Sigmoid colon (tissue), 7 donors: ENCODE measurements at regions of chr22 and their contacts with region 1.

Region 1: DNA sequence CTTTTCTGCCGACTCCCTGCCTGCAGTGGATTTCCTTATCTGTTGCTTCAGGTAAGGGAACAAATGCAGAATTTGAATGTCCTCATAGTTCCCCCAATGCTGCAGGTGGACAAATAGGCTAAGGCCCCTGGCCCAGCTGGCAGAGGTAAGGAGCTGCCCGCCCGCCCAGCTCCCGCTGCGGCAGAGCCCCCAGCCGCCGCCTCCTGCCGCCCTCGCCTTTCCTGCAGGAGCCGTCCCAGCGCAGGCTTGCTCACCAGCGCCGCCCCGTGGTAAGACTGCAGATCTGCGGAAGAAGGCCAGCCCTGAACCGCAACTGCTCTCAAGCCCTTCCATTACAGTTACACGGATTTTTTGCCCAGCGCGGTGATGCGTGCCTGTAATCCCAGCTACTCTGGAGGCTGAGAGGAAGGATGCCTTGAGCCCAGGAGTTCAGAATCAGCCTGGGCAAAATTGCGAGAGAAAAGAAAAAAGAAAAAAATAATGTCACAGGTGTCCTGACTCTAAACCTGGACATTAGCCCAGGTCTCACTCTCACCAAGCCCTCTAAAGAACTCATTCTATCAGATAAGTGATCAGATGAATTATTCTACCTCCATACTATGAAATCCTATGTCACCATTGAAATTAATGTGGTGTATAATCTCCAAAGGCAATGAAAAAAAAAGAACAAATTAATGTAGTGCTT is 51.2 kb upstream of the EMID1 start:
- DNase-seq: peak; percentile 85
- H3K4me3 ChIP-seq: peak overlapping the region in 3 of 4 donors; percentile 8 to 27 (median 18)
- H3K27ac ChIP-seq: no peak overlapping the region
- H3K4me1 ChIP-seq: peaks cover 0 to 22% (median 20%) of the 10 kb centered on the region in 4 donors
- H3K27me3 ChIP-seq: no peaks in the 10 kb centered on the region
- CTCF ChIP-seq: peak; percentile 72 to 94 (median 82)
- EP300 ChIP-seq: no peak
- POLR2A ChIP-seq: no peak

Region 2: GRCh38 chr22:28855355-28856094 is 299.0 kb before region 1 on chr22:
- intact Hi-C with region 1: loop called (anchors 5 kb)
- DNase-seq: peak; percentile 68
- H3K4me3 ChIP-seq: no peak overlapping the region
- H3K27ac ChIP-seq: no peak overlapping the region
- H3K4me1 ChIP-seq: peaks cover 0 to 7% (median 3%) of the 10 kb centered on the region in 4 donors
- H3K27me3 ChIP-seq: no peaks in the 10 kb centered on the region
- CTCF ChIP-seq: peak; percentile 88 to 97 (median 94)
- EP300 ChIP-seq: no peak
- POLR2A ChIP-seq: no peak

Region 3: DNA sequence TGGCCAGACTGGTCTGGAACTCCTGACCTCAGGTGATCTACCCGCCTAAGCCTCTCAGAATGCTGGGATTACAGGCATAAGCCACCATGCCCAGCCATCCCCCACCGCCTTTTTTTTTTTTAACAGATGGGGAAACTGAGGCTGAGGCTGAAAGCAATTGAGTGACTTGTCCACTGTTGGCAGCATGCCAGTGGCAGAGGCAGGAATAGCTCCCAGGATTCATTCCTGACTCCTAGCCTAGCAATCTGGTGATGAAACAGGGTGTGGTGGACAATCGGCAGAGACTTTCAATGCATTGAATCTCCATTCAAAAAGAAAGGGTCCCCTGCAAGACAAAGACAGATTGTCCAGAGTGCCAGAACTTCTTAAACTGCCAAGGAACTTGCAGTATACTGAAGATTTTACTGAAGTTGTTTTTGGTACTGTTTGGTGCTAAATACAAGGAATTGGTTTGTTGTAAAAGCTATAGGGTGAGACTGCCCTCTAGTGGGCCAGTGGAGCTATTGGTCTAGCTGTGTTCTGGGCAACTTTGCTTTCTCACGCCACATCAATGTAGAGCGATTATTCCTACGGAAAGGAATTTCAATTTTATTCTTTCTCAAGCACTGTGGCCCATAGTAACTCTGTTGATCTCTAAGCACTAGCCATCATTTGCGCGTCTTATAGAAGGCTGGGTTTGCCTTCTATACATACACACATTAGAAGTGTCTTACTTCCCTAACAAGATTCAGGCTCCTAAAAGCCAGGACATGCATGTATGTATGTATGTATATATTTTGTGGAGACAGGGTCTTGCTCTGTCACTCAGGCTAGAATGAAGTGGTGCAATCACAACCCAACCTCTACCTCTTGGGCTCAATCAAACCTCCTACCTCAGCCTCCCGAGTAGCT is 113.9 kb before region 1 on chr22:
- intact Hi-C with region 1: no loop called
- DNase-seq: peak; percentile 81
- H3K4me3 ChIP-seq: no peak overlapping the region
- H3K27ac ChIP-seq: no peak overlapping the region
- H3K4me1 ChIP-seq: peaks cover 0 to 21% (median 15%) of the 10 kb centered on the region in 4 donors
- H3K27me3 ChIP-seq: no peaks in the 10 kb centered on the region
- CTCF ChIP-seq: peak; percentile 87 to 97 (median 94)
- EP300 ChIP-seq: no peak
- POLR2A ChIP-seq: no peak

Region 4: DNA sequence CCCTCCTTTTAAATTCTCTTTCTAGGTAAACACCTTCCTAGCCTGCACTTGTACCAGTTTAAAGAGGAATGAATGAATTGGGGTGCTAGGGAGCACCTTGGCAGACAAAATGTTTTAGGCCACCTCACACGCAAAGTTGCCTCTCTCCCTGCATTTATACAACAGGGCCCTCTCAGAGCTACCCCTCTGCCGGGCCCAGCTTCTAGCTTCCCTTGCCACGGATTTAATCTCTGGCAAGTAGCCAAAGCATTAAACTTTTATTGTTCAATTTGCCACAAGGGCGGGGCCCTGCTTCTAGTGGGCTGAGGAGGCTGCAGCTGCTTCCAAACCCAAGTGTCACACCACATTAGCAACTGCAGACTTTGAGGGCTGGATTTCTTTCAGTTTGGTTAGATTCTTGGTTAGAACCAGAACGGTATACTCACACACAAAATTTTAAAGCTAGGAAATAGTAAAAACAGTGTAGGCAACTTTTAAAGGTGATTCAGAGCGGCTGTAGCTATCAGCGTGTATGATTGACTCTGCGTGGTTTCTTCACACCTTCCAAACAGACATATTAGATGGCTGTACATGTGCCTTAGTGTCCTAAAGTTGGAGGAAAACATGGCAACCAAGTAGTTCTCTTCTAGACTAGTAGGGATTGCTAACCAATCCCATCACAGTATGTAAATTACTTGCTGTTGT is 75.1 kb before region 1 on chr22:
- intact Hi-C with region 1: loop called (anchors 5 kb)
- DNase-seq: no peak
- H3K4me3 ChIP-seq: no peak overlapping the region
- H3K27ac ChIP-seq: no peak overlapping the region
- H3K4me1 ChIP-seq: peaks cover 0 to 4% (median 1%) of the 10 kb centered on the region in 4 donors
- H3K27me3 ChIP-seq: no peaks in the 10 kb centered on the region
- CTCF ChIP-seq: no peak
- EP300 ChIP-seq: no peak
- POLR2A ChIP-seq: no peak

Region 5: GRCh38 chr22:29205594-29206371 is 51.3 kb after region 1 on chr22 and contains the start of gene EMID1:
- intact Hi-C with region 1: no loop called
- DNase-seq: peak; percentile 76
- H3K4me3 ChIP-seq: peak within 1 kb of the TSS; percentile 30 to 55 (median 51)
- H3K27ac ChIP-seq: no peak within 1 kb of the TSS
- H3K4me1 ChIP-seq: peaks cover 0 to 12% (median 9%) of the 10 kb centered on the region in 4 donors
- H3K27me3 ChIP-seq: peaks cover 0 to 5% (median 5%) of the 10 kb centered on the region in 3 donors
- CTCF ChIP-seq: peak in 1 of 4 experiments; percentile 25
- EP300 ChIP-seq: no peak
- POLR2A ChIP-seq: no peak
- total RNA-seq, gene EMID1: 0.27 to 4.7 (median 1.2) TPM

Region 6: DNA sequence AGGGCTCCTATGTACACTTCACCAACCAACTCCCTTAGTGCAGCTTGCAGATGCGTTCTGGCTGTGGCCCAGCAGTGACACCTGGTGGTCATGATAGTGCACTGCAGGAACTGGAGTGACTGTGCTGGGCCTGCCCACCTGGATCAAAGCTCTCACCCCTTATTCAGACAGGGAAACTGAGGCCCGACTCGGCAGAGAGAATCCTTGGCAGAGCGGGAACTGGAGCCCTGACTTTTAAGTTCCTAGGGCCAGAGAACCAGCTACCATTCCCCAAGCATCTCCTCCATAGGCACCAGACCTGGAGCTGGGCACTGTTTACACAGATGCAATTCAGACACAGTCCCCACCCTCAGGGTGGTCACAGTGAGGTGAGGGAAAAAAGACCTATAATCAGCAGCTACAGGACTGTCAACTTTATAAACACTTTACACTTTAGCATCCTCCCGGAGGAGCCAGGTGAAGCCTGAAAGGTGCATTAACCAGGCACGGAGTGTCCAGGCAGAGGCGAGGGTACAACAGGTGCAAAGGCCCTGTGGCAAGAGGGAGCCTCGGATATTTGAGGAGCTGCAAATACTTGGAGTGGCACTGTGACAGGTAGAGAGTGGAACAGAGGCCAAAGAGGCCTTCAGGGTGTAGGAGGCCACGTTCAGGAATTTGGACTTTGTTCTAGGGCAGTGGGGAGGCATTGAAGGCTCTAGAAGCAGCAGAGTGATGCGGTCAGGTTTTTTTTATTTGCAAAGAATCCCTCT is 91.3 kb after region 1 on chr22:
- intact Hi-C with region 1: loop called (anchors 5 kb)
- DNase-seq: peak; percentile 88
- H3K4me3 ChIP-seq: no peak overlapping the region
- H3K27ac ChIP-seq: no peak overlapping the region
- H3K4me1 ChIP-seq: no peaks in the 10 kb centered on the region
- H3K27me3 ChIP-seq: no peaks in the 10 kb centered on the region
- CTCF ChIP-seq: peak; percentile 84 to 98 (median 92)
- EP300 ChIP-seq: no peak
- POLR2A ChIP-seq: no peak